ENCODE measurements at regions of chr7 and their contacts with region 1.

Region 1: DNA sequence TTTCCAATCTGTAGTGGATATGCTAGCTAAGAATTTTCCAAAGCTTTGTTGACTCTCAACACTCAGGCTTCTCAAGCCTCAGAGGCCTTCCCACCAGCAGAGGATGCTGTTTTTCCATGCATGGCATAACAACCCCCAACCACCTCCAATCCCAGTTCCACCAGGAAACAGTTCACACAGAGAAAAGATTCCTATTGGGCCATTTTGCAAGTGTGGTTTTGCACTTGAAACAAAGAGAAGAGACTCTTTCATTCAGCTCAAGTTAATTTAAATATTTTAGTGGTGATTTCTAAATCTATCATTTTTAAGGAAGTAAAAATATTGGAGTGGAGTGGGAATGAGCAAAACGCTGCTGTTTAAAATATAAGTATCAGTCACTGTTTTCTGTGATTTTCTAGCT is 105.6 kb upstream of the COL1A2 start:
- DNase-seq: peak; percentile 95

Region 2: GRCh38 chr7:94436018-94436604 is 147.0 kb after region 1 on chr7:
- in situ Hi-C with region 1: loop called (anchors 25 kb)
- DNase-seq: peak; percentile 91